Adrenal gland (tissue), 19 donors: ENCODE measurements at regions of chr3 and their contacts with region 1.

Region 1: DNA sequence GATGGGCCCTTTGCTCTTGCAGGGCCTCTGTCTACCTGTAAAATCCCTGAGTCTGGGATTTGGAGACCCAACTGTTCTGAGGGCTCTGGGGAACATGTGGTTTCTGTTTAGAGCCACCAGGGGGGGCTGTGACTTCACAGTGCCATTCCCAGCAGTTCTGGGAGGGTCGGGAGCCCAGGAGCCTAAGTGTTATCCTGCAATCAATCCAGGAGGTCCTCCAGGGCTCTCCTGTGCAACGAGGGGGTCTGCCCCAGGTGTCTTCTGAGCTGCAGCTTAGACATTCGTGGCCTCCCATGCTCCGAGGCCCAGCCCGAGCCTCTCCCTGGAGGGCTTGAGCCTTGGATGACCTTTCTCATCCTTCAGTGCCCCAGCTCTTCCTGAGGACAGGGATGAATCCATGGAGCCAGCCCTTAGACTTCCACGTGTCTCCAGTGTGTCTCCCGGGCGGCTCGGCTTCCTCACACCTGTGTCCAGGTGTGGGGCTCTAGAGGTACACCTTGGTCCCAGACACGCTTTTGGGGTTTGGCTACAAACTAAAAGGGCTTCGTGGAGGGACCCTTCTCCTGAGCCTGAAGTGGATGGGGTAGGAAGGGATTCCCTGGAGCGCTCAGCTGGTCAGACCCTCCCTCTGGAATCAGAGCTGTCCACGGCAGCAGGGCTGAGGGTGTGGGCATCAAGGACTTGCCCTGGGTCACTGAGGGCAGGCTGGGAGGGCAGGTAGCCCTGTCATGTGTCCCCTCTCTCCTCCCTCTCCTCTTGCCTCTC is 20.3 kb upstream of the ABTB1 start:
- DNase-seq: peak; percentile 44 to 77 (median 50)
- H3K4me3 ChIP-seq: no peak overlapping the region
- H3K27ac ChIP-seq: no peak overlapping the region
- H3K4me1 ChIP-seq: peaks cover 0 to 17% of the 10 kb centered on the region in 2 donors
- H3K27me3 ChIP-seq: no peaks in the 10 kb centered on the region
- CTCF ChIP-seq: peak; percentile 72 to 89 (median 83)
- POLR2A ChIP-seq: no peak

Region 2: DNA sequence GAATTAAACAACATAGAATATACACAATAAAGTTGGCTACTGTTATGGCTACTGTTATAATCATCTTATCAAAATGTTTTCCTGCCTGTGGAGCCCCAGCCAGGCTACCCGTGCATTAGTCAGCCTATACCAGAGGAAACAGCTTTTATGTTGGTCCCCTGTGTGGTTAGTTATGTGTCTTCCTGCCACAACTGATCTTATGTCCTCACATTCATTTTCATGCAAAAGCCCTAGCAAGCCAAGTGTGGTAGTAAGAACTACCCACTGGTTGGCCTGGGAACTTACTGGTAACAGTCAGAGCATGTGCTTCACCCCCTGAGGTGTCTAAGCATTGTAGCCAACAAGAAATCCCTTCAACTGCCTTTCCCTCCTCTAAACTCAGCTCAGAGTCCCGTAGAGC is 148.1 kb after region 1 on chr3:
- intact Hi-C with region 1: no loop called
- DNase-seq: no peak
- H3K4me3 ChIP-seq: no peak overlapping the region
- H3K27ac ChIP-seq: no peak overlapping the region
- H3K4me1 ChIP-seq: no peaks in the 10 kb centered on the region
- H3K27me3 ChIP-seq: no peaks in the 10 kb centered on the region
- CTCF ChIP-seq: no peak
- POLR2A ChIP-seq: no peak

Region 3: DNA sequence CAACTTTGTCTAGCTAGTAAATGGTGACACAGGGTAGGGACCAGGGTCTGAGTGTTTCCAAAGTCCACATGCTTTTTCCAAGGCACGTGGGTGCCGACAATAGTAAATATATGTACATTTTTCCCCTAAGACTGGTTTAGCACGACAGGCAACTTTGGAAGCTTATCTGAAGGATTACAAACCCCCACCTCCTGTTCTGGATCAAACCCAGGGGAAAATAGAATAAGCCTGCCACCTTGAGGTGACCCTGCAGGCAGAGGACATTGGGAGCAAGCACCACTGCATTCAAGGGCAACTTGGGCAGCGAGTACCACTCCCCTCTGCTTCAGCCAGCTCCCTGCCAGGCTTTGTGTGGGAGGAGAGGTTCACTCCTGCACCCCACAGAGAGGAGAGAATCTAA is 307.4 kb after region 1 on chr3:
- intact Hi-C with region 1: loop called in 1 of 2 experiments (anchors 10 kb)
- DNase-seq: peak in 6 of 7 donors; percentile 21 to 45 (median 29)
- H3K4me3 ChIP-seq: no peak overlapping the region
- H3K27ac ChIP-seq: no peak overlapping the region
- H3K4me1 ChIP-seq: no peaks in the 10 kb centered on the region
- H3K27me3 ChIP-seq: no peaks in the 10 kb centered on the region
- CTCF ChIP-seq: peak in 5 of 6 experiments; percentile 36 to 53 (median 43)
- POLR2A ChIP-seq: no peak

Region 4: DNA sequence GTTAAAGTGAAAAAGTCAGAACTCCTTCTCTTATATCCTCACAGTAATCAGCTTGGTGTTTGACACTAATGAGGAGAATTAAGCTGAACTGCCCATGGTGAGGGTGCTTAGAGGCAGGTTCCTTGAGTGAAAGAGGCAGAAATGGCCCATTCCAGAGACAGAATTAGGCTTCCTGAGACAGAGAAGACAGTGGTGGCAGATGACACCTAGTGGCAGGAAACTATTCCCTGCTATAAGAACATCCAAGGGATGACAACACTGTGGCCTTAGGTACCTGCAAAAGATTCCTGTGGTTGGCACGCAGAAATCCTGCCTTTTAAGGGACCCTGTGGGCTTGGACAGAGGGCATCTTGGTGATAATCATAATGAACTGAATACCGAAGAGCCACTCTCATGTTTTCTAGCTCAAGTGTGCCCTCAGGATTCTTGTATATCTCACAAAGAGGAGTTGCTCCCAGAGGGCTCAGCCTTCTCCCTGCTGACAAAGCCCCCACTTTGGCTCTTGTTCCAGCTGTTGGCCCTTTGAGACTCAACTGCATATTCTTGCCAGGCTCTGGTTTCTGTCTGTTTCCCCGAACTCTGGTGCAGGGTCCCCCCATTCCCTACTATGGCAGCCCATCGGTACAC is 318.7 kb after region 1 on chr3:
- intact Hi-C with region 1: loop called (anchors 5 to 10 kb)
- DNase-seq: peak; percentile 40 to 73 (median 53)
- H3K4me3 ChIP-seq: no peak overlapping the region
- H3K27ac ChIP-seq: no peak overlapping the region
- H3K4me1 ChIP-seq: no peaks in the 10 kb centered on the region
- H3K27me3 ChIP-seq: no peaks in the 10 kb centered on the region
- CTCF ChIP-seq: peak; percentile 71 to 84 (median 78)
- POLR2A ChIP-seq: no peak